ENCODE measurements at regions of chr2 and their contacts with region 1.

Region 1: DNA sequence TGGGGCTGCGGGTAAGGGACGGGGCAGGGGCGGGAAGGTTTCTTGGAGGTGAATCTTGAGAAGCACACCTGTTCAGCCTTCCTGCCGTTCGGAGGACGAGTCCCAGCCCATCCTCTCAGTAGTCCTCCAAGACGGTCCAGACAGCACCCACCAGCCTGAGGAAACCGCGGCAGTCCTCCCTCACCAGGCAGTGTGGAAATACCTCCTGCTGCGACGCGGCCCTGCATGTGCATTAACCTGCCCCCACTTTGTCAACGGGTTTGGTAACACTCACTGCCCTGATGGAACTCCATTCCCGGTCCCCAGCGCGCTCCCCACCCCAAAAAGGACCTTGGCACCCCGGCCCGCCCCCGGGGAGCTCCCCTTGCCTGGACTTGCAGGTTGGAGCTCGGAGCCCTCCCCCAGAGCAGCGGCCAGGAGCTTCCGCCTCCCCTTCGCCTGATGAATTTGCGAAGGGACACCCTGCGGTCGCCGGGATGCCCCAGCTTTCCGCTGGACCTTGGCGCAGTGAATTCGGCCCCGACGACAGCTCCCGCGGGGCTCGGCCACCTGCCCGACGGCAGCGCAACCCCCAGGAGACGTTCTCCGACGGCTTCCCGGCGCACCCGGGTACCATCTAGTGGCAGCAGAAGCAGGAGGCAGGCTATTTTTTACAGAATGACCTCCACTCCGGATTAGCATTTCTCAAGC is 31.5 kb downstream of the ACVR1C start:
- DNase-seq: peak; percentile 78
- H3K4me3 Mint-ChIP-seq: peak overlapping the region; percentile 71
- H3K27ac Mint-ChIP-seq: no peak overlapping the region
- H3K4me1 Mint-ChIP-seq: peaks cover 18% of the 10 kb centered on the region
- H3K27me3 Mint-ChIP-seq: no peaks in the 10 kb centered on the region

Region 2: DNA sequence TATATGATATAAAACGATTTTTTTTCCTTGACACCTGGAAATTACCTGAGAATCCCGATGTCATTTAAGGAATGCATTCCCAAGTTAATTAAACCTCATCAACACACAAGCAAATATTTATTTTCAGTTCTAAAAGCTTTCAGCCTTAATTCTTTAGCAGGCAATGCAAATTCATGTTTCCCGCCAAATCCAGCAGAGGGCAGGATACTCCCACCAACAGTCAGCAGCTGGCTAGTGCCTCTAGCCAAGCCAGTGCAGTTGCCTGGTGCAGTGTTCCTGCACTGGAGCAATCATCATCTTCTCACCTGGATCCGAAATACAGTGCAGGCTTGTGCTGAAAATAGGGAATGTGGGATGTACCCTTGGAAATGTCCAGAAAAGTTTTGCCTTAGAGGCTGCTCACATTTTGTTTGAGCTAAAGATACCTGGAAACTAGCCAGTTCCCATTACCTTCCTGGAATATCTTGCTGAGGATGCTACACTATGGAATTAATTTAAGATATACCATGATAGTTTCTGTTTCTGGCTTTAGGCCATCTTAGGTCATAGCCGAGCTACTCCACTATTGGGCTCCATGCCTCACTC is 104.9 kb before region 1 on chr2:
- CTCF ChIA-PET with region 1: interaction called, 25 read pairs
- intact Hi-C with region 1: loop called (anchors 1 kb)
- DNase-seq: peak; percentile 89
- H3K4me3 Mint-ChIP-seq: no peak overlapping the region
- H3K27ac Mint-ChIP-seq: no peak overlapping the region
- H3K4me1 Mint-ChIP-seq: peaks cover 62% of the 10 kb centered on the region
- H3K27me3 Mint-ChIP-seq: no peaks in the 10 kb centered on the region

Region 3: DNA sequence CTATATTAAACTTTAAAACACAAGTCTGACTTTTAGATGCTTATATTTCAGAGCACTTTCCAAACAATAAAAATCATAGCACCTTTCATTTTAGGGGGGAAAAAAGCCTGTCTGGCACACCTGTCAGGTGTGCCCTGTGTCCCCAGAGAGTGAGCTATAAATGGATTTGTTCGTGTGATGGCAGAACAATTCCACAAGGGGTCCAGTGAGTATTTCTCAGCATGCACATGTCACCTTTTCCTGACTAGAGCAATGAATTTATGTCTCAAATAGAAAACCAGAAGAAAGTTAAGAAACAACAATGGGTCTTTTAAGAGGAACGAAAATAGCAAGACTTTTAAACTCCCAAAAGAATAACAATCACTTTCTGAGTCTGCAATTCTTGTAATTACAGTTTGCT is 24.4 kb before region 1 on chr2:
- CTCF ChIA-PET with region 1: interaction called, 3 read pairs
- intact Hi-C with region 1: loop called (anchors 2 kb)
- DNase-seq: peak; percentile 21
- H3K4me3 Mint-ChIP-seq: no peak overlapping the region
- H3K27ac Mint-ChIP-seq: no peak overlapping the region
- H3K4me1 Mint-ChIP-seq: no peaks in the 10 kb centered on the region
- H3K27me3 Mint-ChIP-seq: no peaks in the 10 kb centered on the region